Calu3 (cell line): ENCODE measurements at regions of chr19 and their contacts with region 1.

Region 1: GRCh38 chr19:11203194-11204075 is 6.1 kb upstream of the KANK2 start:
- DNase-seq: peak; percentile 69
- H3K4me3 Mint-ChIP-seq: no peak overlapping the region
- H3K27ac Mint-ChIP-seq: peak overlapping the region; percentile 50
- H3K4me1 Mint-ChIP-seq: peaks cover 20% of the 10 kb centered on the region
- H3K27me3 Mint-ChIP-seq: no peaks in the 10 kb centered on the region
- CTCF ChIP-seq: peak; percentile 81

Region 2: DNA sequence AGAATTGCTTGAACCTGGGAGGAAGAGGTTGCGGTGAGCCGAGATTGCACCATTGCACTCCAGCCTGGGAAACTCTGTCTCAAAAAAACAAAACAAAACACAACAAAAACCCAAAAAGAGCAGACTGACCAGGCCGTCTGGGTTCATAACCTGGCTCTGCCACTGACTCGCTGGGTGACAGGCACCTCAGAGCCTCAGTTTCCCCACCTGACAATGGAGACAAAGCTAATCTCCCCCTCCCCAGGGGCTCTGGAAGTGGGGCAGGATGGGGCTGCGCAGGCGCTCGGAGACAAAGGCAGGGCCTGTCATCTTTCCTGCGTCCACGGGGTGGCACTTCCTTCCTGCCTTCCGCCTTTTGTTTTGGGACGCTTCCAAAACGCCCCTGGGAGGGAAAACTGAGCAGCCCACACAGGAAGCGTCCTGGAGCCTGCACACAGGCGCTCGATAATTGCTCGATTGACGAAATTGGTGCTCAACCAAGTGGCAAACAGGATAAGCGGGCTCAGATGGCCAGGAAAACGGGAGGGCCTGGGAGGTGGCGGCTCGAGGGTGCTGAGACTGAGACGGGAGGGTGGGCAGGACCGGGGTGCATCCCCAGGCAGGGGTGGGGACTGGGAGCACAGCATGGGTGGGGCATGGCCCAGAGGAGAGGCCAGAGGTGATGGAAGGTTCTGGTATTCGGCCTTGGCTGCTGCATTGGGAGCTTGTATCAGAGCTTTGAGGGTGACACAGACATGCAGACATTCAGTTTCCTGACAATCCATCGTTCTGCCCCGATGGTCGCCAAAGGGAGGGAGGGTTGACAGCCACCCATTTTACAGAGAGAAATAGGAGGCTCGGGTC is 65.7 kb before region 1 on chr19:
- CTCF ChIA-PET with region 1: interaction called, 5 read pairs
- intact Hi-C with region 1: loop called (anchors 2 kb)
- DNase-seq: peak; percentile 78
- H3K4me3 Mint-ChIP-seq: peak overlapping the region; percentile 44
- H3K27ac Mint-ChIP-seq: peak overlapping the region; percentile 39
- H3K4me1 Mint-ChIP-seq: peaks cover 12% of the 10 kb centered on the region
- H3K27me3 Mint-ChIP-seq: no peaks in the 10 kb centered on the region
- CTCF ChIP-seq: no peak

Region 3: DNA sequence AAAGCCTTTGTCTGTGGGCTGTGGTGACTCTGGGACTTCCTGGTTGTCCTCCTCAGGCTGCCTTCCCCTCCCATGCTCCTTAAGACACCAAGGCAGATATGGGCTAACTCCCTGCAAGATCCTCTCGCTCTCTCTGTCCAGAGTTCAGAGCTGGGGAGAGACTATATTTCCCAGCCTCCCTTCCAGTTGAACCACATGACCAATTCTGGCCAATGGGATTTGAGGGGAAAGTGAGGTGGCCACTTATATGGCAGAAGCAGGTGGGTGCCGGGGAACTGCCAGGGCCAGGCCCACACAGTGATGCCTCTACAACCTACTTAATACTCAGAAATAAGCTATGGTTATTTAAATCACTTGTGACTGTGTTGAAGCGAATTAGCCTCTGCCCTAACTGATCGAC is 19.8 kb after region 1 on chr19:
- CTCF ChIA-PET with region 1: no interaction called
- intact Hi-C with region 1: no loop called
- DNase-seq: no peak
- H3K4me3 Mint-ChIP-seq: no peak overlapping the region
- H3K27ac Mint-ChIP-seq: no peak overlapping the region
- H3K4me1 Mint-ChIP-seq: no peaks in the 10 kb centered on the region
- H3K27me3 Mint-ChIP-seq: no peaks in the 10 kb centered on the region
- CTCF ChIP-seq: no peak

Region 4: GRCh38 chr19:11551603-11552235 is 348.3 kb after region 1 on chr19:
- CTCF ChIA-PET with region 1: no interaction called
- intact Hi-C with region 1: no loop called
- DNase-seq: peak; percentile 9
- H3K4me3 Mint-ChIP-seq: no peak overlapping the region
- H3K27ac Mint-ChIP-seq: no peak overlapping the region
- H3K4me1 Mint-ChIP-seq: peaks cover 1% of the 10 kb centered on the region
- H3K27me3 Mint-ChIP-seq: no peaks in the 10 kb centered on the region
- CTCF ChIP-seq: no peak